Thyroid gland (tissue), 4 donors: ENCODE measurements at regions of chr2 and their contacts with region 1.

Region 1: GRCh38 chr2:80238692-80239469 is 65.7 kb downstream of the LRRTM1 start:
- DNase-seq: peak; percentile 24 to 34
- H3K4me3 ChIP-seq: no peak overlapping the region
- H3K27ac ChIP-seq: no peak overlapping the region
- H3K4me1 ChIP-seq: peaks cover 14 to 21% of the 10 kb centered on the region in 2 donors
- H3K27me3 ChIP-seq: no peaks in the 10 kb centered on the region
- CTCF ChIP-seq: peak; percentile 26 to 81 (median 58)
- POLR2A ChIP-seq: no peak

Region 2: GRCh38 chr2:80073134-80073561 is 165.7 kb before region 1 on chr2:
- intact Hi-C with region 1: loop called (anchors 10 kb)
- DNase-seq: peak; percentile 34 to 45
- H3K4me3 ChIP-seq: no peak overlapping the region
- H3K27ac ChIP-seq: no peak overlapping the region
- H3K4me1 ChIP-seq: peaks cover 6% of the 10 kb centered on the region in 2 donors
- H3K27me3 ChIP-seq: no peaks in the 10 kb centered on the region
- CTCF ChIP-seq: peak; percentile 34 to 76 (median 65)
- POLR2A ChIP-seq: no peak

Region 3: GRCh38 chr2:80420530-80421208 is 181.8 kb after region 1 on chr2:
- intact Hi-C with region 1: no loop called
- DNase-seq: no peak
- H3K4me3 ChIP-seq: no peak overlapping the region
- H3K27ac ChIP-seq: no peak overlapping the region
- H3K4me1 ChIP-seq: no peaks in the 10 kb centered on the region
- H3K27me3 ChIP-seq: no peaks in the 10 kb centered on the region
- CTCF ChIP-seq: no peak
- POLR2A ChIP-seq: no peak